Activated T-helper 2 cell treated with anti-CD3 and anti-CD28 coated beads, Interferon-gamma antibody, Interleukin-2, Interleukin-4, amounts not matched to agents 10 μg/mL and 5 μg/mL and 100 μg/mL, durations not matched to agents 14 hours and 24 hours and 36 hours (primary cell): ENCODE measurements at regions of chr13 and their contacts with region 1.

Region 1: GRCh38 chr13:24233351-24233901 is 72.9 kb downstream of the SPATA13 start:
- DNase-seq: no peak
- H3K4me3 Mint-ChIP-seq: no peak overlapping the region
- H3K27ac Mint-ChIP-seq: peak overlapping the region; percentile 81
- H3K4me1 Mint-ChIP-seq: peaks cover 47% of the 10 kb centered on the region
- H3K27me3 Mint-ChIP-seq: no peaks in the 10 kb centered on the region

Region 2: GRCh38 chr13:23966691-23967615 is 266.5 kb before region 1 on chr13:
- intact Hi-C with region 1: loop called (anchors 5 kb)
- DNase-seq: peak; percentile 24
- H3K4me3 Mint-ChIP-seq: peak overlapping the region; percentile 73
- H3K27ac Mint-ChIP-seq: peak overlapping the region; percentile 87
- H3K4me1 Mint-ChIP-seq: peaks cover 31% of the 10 kb centered on the region
- H3K27me3 Mint-ChIP-seq: no peaks in the 10 kb centered on the region

Region 3: DNA sequence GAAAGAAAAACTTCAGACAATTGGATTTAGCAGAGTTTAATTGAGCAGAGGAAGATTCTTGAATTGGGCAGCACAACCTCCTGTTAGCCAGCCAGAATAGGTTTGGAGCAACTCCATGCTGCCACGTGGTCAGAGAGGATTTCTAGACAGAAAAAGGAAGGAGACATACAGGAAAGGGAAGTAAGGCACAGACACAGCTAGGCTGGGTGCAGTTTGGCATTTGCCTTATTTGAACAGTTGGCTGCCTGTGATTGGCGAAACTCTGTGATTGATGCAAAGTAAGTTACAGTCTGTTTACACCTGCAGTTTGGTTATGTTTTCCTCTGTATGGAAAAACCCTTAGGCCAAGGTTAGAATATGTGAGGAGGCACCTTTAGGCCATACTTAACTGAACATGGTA is 158.7 kb before region 1 on chr13:
- intact Hi-C with region 1: no loop called
- DNase-seq: no peak
- H3K4me3 Mint-ChIP-seq: no peak overlapping the region
- H3K27ac Mint-ChIP-seq: no peak overlapping the region
- H3K4me1 Mint-ChIP-seq: peaks cover 5% of the 10 kb centered on the region
- H3K27me3 Mint-ChIP-seq: peaks cover 6% of the 10 kb centered on the region

Region 4: DNA sequence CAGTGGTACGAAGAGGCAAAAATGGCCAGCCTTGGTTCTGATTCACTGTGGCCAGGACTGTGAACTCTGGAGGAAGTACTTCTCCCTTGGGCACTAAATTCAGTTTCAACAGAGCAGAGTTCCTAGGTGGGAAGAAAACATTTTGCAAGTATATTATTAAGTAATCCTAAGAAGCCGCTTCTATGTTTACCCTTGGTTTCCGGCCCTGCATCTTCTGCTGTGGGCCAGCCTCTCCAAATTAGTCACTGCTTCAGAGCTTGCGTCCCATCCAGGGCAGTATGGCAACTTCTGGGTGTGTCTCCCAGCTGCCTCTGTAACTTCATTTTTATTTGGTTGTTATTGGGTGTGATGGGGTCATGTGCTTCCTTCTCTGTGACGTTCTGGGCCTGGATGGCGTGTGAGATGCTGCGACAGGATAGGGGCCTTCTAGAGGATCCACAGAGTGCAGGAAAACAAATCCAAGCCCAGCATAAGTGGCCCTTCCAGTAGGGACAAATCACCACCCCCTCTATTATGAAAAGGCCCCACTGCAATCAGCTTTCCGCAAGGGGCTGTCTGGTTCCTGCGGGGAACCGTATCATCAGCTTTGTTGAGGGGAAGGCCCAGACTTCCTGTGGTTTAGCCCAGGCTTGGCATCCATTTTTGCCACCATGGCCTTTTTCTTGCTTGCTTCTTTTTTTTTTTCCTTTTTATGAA is 20.9 kb after region 1 on chr13:
- intact Hi-C with region 1: loop called (anchors 2 kb)
- DNase-seq: peak; percentile 60
- H3K4me3 Mint-ChIP-seq: peak overlapping the region; percentile 87
- H3K27ac Mint-ChIP-seq: peak overlapping the region; percentile 88
- H3K4me1 Mint-ChIP-seq: peaks cover 74% of the 10 kb centered on the region
- H3K27me3 Mint-ChIP-seq: no peaks in the 10 kb centered on the region

Region 5: DNA sequence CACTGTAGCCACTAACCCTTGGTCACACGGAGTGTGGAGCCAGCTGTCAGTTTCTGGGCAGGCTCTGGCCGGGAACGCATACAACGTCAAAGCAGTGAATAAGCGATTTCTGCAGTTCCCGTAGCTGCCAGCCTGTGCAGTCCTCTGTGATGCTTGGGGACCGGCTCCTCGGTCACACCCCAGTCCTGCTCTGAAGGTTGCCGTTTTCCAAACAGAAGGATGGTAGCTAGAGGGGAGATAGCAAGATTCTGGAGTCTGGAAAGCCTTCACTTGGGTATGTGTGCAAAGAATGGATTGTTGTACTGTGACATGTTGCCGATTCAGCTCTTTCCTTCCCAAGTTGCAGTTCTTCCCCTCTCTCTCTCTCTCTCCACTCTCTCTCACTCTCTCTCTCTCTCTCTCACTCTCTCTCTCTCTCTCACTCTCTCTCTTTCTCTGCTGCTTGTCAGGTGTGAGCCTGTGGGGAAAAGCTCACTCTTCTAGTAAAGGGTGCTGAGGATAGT is 37.3 kb after region 1 on chr13:
- intact Hi-C with region 1: loop called (anchors 1 kb)
- DNase-seq: peak; percentile 61
- H3K4me3 Mint-ChIP-seq: peak overlapping the region; percentile 97
- H3K27ac Mint-ChIP-seq: peak overlapping the region; percentile 95
- H3K4me1 Mint-ChIP-seq: peaks cover 81% of the 10 kb centered on the region
- H3K27me3 Mint-ChIP-seq: no peaks in the 10 kb centered on the region